H1 (cell line): ENCODE measurements at regions of chr1 and their contacts with region 1.

Region 1: GRCh38 chr1:19704247-19705113 is 39.8 kb downstream of the HTR6 start:
- DNase-seq: peak; percentile 69 to 95
- H3K4me3 ChIP-seq: peak overlapping the region in 1 of 4 experiments; percentile 41; a peak in 2 of 8 replicates
- H3K27ac ChIP-seq: no peak overlapping the region
- H3K4me1 ChIP-seq: peaks cover 0 to 8% (median 3%) of the 10 kb centered on the region in 4 experiments; a peak in 5 of 7 replicates
- H3K27me3 ChIP-seq: no peaks in the 10 kb centered on the region
- CTCF ChIP-seq: peak; percentile 92 to 95 (median 94)
- EP300 ChIP-seq: no peak
- POLR2A ChIP-seq: no peak
- RAD21 ChIP-seq: peak; percentile 66 to 78

Region 2: DNA sequence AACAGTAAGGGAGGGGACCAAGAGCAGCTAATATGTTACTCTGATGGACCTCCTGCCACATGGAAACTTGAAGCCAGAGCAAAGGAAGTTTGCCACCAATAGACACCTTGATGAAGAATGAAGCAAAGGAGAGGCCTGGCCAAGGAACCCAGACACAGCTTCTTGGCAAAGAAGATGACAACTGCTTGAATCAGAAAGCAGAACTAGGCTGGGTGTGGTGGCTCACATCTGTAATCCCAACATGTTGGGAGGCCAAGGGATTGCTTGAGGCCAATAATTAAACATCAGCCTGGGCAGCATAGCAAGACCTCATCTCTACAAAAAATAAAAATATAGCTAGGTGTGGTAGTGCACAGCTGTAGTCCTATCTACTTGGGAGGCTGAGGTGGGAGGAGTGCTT is 187.5 kb before region 1 on chr1:
- CTCF ChIA-PET with region 1: no interaction called
- POLR2A ChIA-PET with region 1: no interaction called
- DNase-seq: no peak
- H3K4me3 ChIP-seq: no peak overlapping the region
- H3K27ac ChIP-seq: no peak overlapping the region
- H3K4me1 ChIP-seq: no peaks in the 10 kb centered on the region
- H3K27me3 ChIP-seq: no peaks in the 10 kb centered on the region
- CTCF ChIP-seq: no peak
- EP300 ChIP-seq: no peak
- POLR2A ChIP-seq: no peak
- RAD21 ChIP-seq: no peak

Region 3: DNA sequence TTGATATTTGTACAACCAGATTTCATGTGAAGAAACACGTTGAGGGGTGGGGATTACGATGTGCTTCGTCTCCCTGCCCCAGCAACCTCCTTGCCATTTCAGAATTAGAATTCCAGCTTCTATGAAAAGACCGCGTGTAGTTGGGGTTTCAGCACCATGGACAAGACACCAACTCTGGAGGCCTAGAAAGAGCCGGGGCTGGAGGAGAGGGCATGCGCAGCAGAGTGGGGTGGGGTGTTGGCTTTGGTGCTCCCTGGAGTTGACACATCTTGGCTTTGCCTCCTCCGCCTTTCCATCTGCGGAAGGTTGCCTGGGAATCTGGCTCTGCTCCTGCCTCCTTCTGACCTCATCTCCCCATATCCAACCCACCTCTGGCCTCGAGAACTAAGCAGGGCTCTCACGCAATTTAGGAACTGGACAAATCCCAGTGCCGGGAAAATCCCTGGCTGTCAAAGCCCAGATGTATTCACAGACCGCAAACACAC is 28.0 kb before region 1 on chr1:
- CTCF ChIA-PET with region 1: interaction called, 26 read pairs
- POLR2A ChIA-PET with region 1: no interaction called
- DNase-seq: peak; percentile 25 to 82
- H3K4me3 ChIP-seq: no peak overlapping the region
- H3K27ac ChIP-seq: no peak overlapping the region
- H3K4me1 ChIP-seq: peaks cover 0 to 7% (median 2%) of the 10 kb centered on the region in 4 experiments; a peak in 1 of 7 replicates
- H3K27me3 ChIP-seq: no peaks in the 10 kb centered on the region; a peak in 2 of 7 replicates
- CTCF ChIP-seq: no peak
- EP300 ChIP-seq: no peak
- POLR2A ChIP-seq: no peak
- RAD21 ChIP-seq: no peak

Region 4: DNA sequence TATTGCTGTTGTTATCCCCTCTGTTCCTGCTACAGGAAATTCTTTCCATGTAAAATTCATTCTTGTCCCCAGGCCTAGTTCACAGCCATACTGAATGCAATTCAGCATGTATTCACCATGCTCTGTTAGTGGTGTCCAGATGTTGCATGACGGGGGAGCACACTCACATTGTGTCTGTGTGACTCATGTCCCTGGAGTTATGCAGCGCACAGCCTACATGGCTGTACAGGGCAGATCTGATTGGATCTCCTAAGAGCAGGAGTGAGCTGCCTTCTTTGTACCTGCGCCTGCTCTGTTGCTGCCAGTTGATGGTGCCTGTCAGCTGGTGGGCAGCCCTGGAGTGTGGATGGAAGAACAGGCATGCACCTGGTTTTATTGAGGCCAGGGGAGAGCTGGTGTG is 22.2 kb before region 1 on chr1:
- CTCF ChIA-PET with region 1: interaction called, 26 read pairs
- POLR2A ChIA-PET with region 1: no interaction called
- DNase-seq: no peak
- H3K4me3 ChIP-seq: no peak overlapping the region
- H3K27ac ChIP-seq: no peak overlapping the region
- H3K4me1 ChIP-seq: peaks cover 0 to 14% (median 8%) of the 10 kb centered on the region in 4 experiments; a peak in 4 of 7 replicates
- H3K27me3 ChIP-seq: no peaks in the 10 kb centered on the region
- CTCF ChIP-seq: no peak
- EP300 ChIP-seq: no peak
- POLR2A ChIP-seq: no peak
- RAD21 ChIP-seq: no peak

Region 5: DNA sequence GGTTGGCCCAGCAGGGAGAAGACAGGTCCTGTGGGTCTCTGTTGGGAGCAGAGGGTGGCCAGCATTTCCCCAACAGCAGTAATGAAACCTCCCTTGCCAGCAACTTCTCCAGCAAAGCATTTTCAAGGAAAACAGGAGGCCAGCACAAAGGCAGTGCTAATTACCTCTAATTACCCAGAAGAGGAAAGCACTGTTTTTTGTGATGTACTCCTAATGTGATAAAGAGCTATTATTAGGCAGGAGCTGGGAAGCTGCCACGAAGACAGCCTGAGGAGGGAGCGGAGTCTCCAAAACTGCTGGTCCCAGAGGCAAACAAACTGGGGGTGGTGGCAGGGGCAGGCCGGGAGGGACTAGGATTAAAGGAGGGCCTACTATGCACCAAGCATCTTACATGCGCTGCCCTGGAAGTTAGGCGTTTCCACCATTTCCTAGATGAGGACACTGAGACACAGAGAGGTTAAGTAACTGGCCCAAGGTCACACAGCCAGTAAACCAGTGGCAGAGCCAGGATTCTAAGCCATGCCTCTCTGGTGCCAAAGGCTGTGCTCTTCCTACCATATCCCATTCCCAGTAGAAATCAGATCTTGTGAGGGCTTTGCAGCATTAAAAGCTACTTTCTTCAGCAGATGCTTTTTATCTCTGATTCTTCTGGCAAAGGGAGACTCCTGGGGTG is 15.3 kb before region 1 on chr1:
- CTCF ChIA-PET with region 1: interaction called, 45 read pairs
- POLR2A ChIA-PET with region 1: no interaction called
- DNase-seq: no peak
- H3K4me3 ChIP-seq: no peak overlapping the region
- H3K27ac ChIP-seq: no peak overlapping the region
- H3K4me1 ChIP-seq: peaks cover 3 to 13% (median 10%) of the 10 kb centered on the region in 4 experiments
- H3K27me3 ChIP-seq: no peaks in the 10 kb centered on the region
- CTCF ChIP-seq: no peak
- EP300 ChIP-seq: no peak
- POLR2A ChIP-seq: no peak
- RAD21 ChIP-seq: no peak

Region 6: GRCh38 chr1:19715334-19716203 is 11.1 kb after region 1 on chr1:
- CTCF ChIA-PET with region 1: interaction called, 46 read pairs
- POLR2A ChIA-PET with region 1: interaction called, 6 read pairs
- DNase-seq: peak; percentile 96 to 98
- H3K4me3 ChIP-seq: no peak overlapping the region
- H3K27ac ChIP-seq: no peak overlapping the region
- H3K4me1 ChIP-seq: peaks cover 0 to 3% (median 0%) of the 10 kb centered on the region in 4 experiments; a peak in 1 of 7 replicates
- H3K27me3 ChIP-seq: no peaks in the 10 kb centered on the region
- CTCF ChIP-seq: peak; percentile 80 to 99 (median 97)
- EP300 ChIP-seq: peak in 1 of 2 experiments; percentile 23; a peak in 1 of 3 replicates
- POLR2A ChIP-seq: no peak
- RAD21 ChIP-seq: peak; percentile 69 to 77

Region 7: DNA sequence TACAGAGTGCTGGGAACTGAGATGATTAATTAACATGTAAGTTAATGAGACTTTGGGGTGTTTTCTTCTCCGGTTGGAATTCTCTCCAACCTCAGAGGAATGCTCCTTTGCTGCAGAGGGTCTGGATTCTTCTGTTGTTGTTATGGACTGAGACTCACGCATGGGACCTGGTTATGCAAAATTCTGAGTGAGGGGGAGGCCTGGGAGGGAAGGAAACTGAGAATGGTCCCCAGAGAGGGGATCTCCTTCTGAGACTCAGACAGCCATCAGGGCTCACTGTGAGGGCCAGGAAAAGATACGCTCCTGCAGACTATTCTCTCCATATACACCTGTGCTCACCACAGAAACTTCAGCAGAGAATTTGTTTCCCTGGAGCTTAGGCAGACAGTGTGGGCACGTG is 16.5 kb after region 1 on chr1:
- CTCF ChIA-PET with region 1: interaction called, 46 read pairs
- POLR2A ChIA-PET with region 1: interaction called, 6 read pairs
- DNase-seq: no peak
- H3K4me3 ChIP-seq: no peak overlapping the region
- H3K27ac ChIP-seq: no peak overlapping the region
- H3K4me1 ChIP-seq: peaks cover 0 to 6% (median 2%) of the 10 kb centered on the region in 4 experiments; a peak in 3 of 7 replicates
- H3K27me3 ChIP-seq: no peaks in the 10 kb centered on the region
- CTCF ChIP-seq: no peak
- EP300 ChIP-seq: no peak
- POLR2A ChIP-seq: no peak
- RAD21 ChIP-seq: no peak

Region 8: DNA sequence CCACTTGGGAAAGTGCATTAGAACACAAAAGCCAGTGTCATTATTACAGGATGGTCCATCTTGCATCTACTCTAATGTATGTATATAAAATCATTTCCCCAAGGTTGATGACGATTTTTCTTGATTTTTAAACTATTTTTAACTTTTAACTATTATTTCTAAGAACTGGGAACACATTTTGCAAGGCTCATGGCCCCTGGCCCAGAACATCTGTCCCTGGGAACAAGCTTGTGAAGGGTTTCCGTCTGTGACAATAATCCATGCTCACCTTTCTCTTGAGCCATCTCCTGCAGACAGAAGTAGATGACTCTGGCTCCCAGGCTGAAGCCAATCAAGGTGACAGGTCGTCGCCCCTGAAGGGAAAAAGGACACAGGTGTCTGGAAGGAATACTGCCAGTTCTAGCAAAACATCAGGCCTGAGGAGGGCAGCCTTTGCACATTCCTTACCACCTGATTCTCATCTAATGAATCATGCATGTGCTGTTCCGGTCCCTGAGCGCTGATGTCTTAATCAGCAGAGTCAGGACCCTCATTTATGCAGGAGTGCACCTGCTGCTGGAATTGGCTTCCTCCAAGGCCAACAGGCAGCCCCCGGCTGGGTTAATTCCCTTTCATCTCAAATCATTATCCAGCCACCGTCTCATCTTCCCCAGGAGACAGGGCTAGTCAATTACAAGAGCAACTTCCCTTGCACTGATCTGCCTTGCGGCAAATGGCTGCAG is 32.8 kb after region 1 on chr1:
- CTCF ChIA-PET with region 1: interaction called, 13 read pairs
- POLR2A ChIA-PET with region 1: no interaction called
- DNase-seq: no peak
- H3K4me3 ChIP-seq: no peak overlapping the region
- H3K27ac ChIP-seq: no peak overlapping the region
- H3K4me1 ChIP-seq: no peaks in the 10 kb centered on the region
- H3K27me3 ChIP-seq: no peaks in the 10 kb centered on the region; a peak in 1 of 7 replicates
- CTCF ChIP-seq: no peak
- EP300 ChIP-seq: no peak
- POLR2A ChIP-seq: no peak
- RAD21 ChIP-seq: peak in 1 of 2 experiments; percentile 16; a peak in 2 of 4 replicates